Psoas muscle (tissue), 8 donors: ENCODE measurements at regions of chr2 and their contacts with region 1.

Region 1: DNA sequence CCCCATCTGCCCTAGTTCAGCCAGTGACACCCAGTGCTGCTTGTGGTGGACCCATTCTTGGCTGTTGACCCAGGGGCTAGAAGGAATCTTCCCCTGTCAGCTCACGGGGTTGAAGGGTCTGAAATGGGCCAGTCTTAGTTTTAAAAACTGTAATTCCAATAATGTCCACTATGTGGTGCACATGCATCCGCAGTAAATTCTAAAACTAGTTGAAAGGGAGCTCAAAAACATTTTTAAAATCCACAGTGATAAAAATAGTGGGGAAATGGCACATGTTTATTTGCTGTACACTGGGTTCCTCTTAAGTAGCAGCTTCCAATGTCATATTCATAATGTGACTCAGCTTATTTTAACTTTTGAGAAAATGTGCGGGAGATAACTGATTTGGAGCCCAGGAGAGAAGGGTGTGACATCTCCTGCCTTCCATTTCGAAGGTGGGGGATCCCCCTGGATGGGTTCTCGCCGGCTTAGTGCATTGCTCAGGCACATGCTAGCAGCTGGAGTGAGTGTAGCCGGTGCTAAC is 32.8 kb downstream of the GRHL1 start:
- DNase-seq: no peak
- ATAC-seq: peak; percentile 66 to 85 (median 71)
- H3K4me3 ChIP-seq: no peak overlapping the region
- H3K27ac ChIP-seq: no peak overlapping the region
- H3K4me1 ChIP-seq: peaks cover 19% of the 10 kb centered on the region
- H3K27me3 ChIP-seq: no peaks in the 10 kb centered on the region
- CTCF ChIP-seq: peak; percentile 85

Region 2: GRCh38 chr2:10028988-10029874 is 45.0 kb after region 1 on chr2:
- intact Hi-C with region 1: loop called in 1 of 2 experiments (anchors 5 kb)
- DNase-seq: peak; percentile 55 to 75
- ATAC-seq: peak in 3 of 4 donors; percentile 56 to 70 (median 61)
- H3K4me3 ChIP-seq: no peak overlapping the region
- H3K27ac ChIP-seq: peak overlapping the region; percentile 46
- H3K4me1 ChIP-seq: no peaks in the 10 kb centered on the region
- H3K27me3 ChIP-seq: no peaks in the 10 kb centered on the region
- CTCF ChIP-seq: no peak

Region 3: GRCh38 chr2:10091182-10091888 is 107.1 kb after region 1 on chr2:
- intact Hi-C with region 1: no loop called
- DNase-seq: no peak
- ATAC-seq: no peak
- H3K4me3 ChIP-seq: peak overlapping the region; percentile 18
- H3K27ac ChIP-seq: no peak overlapping the region
- H3K4me1 ChIP-seq: no peaks in the 10 kb centered on the region
- H3K27me3 ChIP-seq: peaks cover 0 to 24% (median 8%) of the 10 kb centered on the region in 3 donors
- CTCF ChIP-seq: no peak